ENCODE measurements at regions of chrX and their contacts with region 1.

Region 1: DNA sequence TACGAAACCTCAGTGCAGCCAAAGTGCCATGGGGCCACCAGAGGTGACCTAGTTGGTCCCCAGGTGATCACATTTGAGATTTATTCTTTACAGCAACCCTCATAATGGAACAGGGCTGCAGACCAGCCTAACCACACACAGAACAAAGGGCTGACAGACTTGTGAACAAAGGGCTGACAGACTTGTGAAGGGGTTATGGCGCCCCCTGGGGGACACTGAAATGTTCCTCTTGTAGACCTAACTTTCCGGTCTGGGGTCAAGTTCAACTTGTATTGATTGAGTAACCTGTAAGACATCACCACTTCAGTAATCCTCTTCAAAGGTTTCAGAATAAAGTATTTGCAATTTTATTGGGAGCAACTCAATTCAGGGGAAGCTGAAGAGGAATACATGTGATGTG is 175.9 kb upstream of the RPS6KA3 start:
- DNase-seq: peak; percentile 86
- ATAC-seq: peak; percentile 74
- H3K4me3 ChIP-seq: no peak overlapping the region
- H3K27ac ChIP-seq: no peak overlapping the region
- H3K4me1 ChIP-seq: peaks cover 3% of the 10 kb centered on the region; the same call in 1 of the 2 replicates
- H3K27me3 ChIP-seq: no peaks in the 10 kb centered on the region
- CTCF ChIP-seq: peak; percentile 80

Region 2: DNA sequence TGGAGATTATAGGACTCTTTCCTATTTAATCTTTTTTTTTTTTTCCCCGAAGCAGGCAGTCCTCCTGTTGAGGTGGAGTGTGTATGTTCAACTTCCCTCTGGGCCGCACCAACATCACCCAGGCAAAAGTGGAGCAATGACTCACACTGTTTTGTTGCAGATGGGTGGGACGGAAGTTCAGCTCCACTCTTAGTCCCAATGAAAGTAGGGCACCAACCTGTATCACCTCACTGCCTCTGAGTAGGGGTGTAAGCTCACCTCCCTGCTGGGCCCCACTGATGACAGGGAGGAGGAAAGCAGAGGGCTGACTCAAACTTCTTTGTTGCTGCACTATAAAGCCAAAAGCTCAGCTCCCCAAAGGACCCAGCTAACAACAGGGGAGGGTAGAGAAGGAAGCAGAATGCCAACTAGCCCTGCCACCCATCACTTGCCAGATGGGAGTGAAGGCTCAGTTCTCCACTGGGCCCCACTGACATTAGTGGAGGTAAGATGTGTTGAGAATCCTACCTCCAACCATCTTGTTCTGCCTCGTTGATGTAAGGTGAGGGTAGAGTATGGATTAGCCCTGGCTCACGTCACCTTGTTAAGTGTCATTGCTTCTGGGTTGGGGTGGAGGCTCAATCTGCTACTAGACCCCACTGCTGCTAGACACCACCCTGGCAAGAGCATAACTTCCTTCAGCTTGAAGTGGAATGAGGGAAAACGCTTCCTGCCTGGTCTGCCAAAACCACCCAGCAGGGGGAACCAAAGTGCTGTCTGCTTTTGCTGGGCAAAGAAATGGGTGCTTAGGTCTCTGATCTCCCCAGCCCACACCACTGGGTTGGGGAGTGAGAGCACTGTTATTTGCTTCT is 190.0 kb before region 1 on chrX:
- CTCF ChIA-PET with region 1: no interaction called
- POLR2A ChIA-PET with region 1: no interaction called
- intact Hi-C with region 1: loop called (anchors 1 kb)
- DNase-seq: peak; percentile 81
- ATAC-seq: peak; percentile 80
- H3K4me3 ChIP-seq: no peak overlapping the region
- H3K27ac ChIP-seq: no peak overlapping the region
- H3K4me1 ChIP-seq: peaks cover 29% of the 10 kb centered on the region
- H3K27me3 ChIP-seq: no peaks in the 10 kb centered on the region
- CTCF ChIP-seq: peak; percentile 75

Region 3: DNA sequence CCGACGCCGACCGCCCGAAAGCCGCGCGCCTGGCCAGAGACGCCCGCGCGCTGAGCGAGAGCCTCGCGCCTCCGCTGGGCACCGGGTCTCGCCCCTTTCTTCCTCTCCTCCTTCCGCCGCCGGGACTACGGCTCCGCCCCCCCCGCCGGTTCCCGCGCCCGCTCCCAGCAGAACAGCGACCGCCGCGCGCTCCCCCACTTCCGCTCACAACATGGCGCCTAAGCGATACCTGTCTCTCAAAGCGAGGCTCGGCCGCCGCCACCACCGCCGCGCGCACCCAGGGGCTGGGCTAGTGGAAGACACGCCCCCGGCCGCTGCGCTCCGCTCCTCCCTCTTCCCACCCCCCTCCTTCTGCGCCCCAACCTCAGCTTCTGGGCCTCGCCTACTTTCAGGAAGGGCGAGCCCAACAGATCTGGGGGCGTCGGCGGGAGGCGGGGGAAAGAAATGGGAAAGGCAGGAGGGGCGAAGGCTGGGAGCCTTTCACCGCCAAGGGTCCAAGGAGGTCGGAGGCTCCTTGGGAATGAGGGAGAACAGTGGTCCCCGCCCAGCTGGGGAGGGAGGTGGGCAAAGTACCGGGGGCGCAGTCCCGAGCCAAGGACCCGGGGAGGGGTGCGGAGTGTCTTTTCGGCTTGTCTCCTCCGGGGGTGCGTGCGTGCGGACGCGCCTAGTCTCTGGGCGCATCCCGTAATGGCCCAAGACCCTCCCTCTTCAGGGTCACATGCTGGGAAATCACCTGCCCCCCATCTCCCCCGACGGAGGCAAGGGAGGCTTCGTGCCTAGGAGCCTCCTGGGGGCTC is 175.6 kb before region 1 on chrX and contains the start of gene RPS6KA3:
- CTCF ChIA-PET with region 1: no interaction called
- POLR2A ChIA-PET with region 1: no interaction called
- intact Hi-C with region 1: no loop called
- DNase-seq: peak; percentile 82
- ATAC-seq: peak; percentile 72
- H3K4me3 ChIP-seq: peak within 1 kb of the TSS; percentile 84
- H3K27ac ChIP-seq: peak within 1 kb of the TSS; percentile 67
- H3K4me1 ChIP-seq: peaks cover 49% of the 10 kb centered on the region
- H3K27me3 ChIP-seq: no peaks in the 10 kb centered on the region
- CTCF ChIP-seq: no peak
- total RNA-seq, gene RPS6KA3: 22.8 and 24.6 TPM in 2 replicates

Region 4: GRCh38 chrX:20571611-20572010 is 129.0 kb after region 1 on chrX:
- CTCF ChIA-PET with region 1: no interaction called
- POLR2A ChIA-PET with region 1: no interaction called
- intact Hi-C with region 1: no loop called
- DNase-seq: peak; percentile 37
- ATAC-seq: no peak
- H3K4me3 ChIP-seq: no peak overlapping the region
- H3K27ac ChIP-seq: no peak overlapping the region
- H3K4me1 ChIP-seq: no peaks in the 10 kb centered on the region
- H3K27me3 ChIP-seq: no peaks in the 10 kb centered on the region
- CTCF ChIP-seq: no peak

Region 5: DNA sequence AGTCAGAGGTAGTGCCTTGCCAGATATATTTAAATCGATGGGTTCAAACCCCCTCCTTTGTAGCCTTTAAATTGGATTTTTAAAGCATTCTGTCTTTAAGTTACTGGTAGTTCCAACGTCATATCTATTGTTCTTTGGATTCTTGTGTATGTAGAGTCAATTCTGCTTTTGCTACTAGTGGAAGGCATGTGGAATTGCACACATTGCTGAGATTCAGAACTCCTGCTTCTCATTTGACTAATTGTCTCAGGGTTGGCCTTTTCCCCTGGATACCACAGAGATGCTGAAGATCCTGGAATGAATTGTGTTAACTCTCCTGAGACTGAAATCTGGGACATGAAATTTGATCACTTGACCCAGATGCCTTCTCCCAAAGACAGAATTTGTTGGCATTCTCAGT is 152.4 kb after region 1 on chrX:
- CTCF ChIA-PET with region 1: no interaction called
- POLR2A ChIA-PET with region 1: no interaction called
- intact Hi-C with region 1: no loop called
- DNase-seq: peak; percentile 9
- ATAC-seq: no peak
- H3K4me3 ChIP-seq: no peak overlapping the region
- H3K27ac ChIP-seq: no peak overlapping the region
- H3K4me1 ChIP-seq: peaks cover 17% of the 10 kb centered on the region
- H3K27me3 ChIP-seq: no peaks in the 10 kb centered on the region
- CTCF ChIP-seq: peak; percentile 38; the same call in 1 of the 2 replicates

Measured in PC-3 (cell line).